ENCODE measurements at regions of chr15 and their contacts with region 1.

Region 1: DNA sequence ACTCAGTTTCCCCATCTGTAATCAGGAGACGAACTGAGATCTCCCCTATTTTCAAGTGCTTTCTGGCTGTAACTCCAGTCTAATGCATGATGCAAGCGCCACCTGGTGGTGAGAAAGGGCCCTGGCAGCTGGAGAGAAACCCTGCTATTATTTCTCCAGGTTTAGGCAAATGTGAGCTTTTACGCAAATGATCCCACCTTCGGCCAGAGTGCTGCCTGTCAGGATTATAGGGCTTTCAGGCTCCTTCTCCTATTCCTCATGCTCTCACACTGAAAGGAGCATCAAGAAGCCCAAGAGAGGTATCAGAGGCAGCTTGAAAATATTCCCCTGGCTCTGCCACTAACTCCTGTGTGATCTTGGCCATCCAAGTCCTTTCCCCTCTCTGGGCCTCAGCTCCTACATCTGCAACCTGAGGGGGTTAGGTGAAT is 93.9 kb upstream of the RASGRF1 start:
- DNase-seq: peak; percentile 84

Region 2: DNA sequence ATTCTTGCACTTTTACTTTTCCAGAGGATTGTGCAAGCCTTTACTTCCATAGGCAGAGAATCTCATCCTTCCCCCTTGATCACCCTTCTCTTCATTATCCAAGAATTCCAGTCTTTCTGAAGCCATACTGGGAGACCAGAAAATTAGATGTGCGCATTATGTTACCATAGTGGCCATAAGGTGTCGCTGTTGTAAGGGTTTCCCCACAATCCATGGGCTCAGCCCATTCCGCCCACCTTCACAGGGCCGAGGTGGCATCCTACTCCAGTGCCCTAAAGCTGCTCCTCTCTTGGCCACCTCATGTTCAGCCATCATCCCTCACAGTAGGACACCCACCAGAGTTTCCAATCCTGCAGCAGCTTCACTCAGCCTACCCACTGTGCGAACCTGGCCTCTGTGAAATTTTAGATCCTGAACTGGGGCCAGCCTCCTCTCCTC is 274.7 kb before region 1 on chr15:
- in situ Hi-C with region 1: loop called (anchors 25 kb)
- DNase-seq: peak; percentile 76